ENCODE measurements at regions of chr15 and their contacts with region 1.

Region 1: DNA sequence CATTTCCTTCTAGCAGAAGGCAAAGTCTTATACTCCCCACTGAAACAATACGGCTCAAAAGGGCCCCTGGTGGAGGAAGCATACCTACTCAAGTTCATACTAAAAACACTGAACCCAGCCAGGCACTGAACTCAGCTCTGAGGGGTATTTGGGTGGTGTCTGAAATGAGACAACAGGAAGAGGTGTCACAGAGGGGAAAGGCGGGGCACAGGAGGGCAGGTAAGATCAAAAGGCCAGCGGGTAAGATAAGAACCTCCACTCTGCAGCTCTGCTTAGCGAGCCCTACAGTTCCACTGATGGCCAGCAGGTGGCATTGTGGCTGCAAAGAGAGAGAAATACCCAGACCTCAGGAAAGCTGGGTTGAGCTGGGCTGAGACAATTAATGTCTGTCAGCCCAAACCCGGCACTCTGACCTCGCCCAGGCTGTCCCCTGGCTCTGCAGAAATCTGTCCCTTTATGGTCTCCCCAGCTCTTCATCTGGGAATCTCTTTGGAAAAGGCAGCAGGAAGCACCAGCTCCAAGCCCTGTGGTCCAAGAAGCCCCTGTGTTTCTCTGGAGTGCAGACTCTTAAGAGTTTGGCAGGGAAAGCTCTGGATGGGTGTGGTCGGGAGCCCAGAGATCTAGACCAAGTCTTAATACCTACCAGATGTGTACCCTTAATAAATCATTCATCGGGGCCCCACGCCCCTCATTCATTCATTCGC is 8.4 kb downstream of the MFGE8 start:
- DNase-seq: peak; percentile 96
- ATAC-seq: peak; percentile 98
- H3K4me3 Mint-ChIP-seq: no peak overlapping the region
- H3K27ac Mint-ChIP-seq: peak overlapping the region; percentile 69
- H3K4me1 Mint-ChIP-seq: peaks cover 22% of the 10 kb centered on the region
- H3K27me3 Mint-ChIP-seq: no peaks in the 10 kb centered on the region
- CTCF ChIP-seq: peak; percentile 84

Region 2: DNA sequence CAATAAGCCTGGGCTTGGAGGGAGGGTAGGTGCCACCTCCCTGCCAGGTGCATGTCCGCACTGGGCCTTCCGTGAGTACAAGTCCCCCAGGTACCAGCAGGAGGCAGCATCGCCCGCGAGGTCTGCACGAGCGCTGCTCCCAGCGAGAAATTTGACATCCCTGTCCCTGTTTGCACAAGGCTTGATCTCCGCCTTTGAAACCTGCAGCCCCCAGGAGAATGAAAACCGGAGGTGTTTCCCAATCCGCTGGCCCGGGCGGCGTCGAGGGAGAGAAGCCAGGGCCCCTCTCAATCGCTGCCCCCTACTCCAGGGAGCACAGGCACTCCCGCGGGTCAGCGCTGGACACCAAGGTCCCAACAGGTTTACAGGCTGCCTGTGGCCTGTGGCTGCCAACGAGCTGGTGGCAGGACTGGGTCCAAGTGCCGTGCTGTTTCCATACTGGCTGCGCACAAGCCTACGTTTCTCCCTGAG is 10.4 kb before region 1 on chr15:
- CTCF ChIA-PET with region 1: interaction called, 50 read pairs
- POLR2A ChIA-PET with region 1: interaction called, 6 read pairs
- intact Hi-C with region 1: no loop called
- DNase-seq: peak; percentile 91
- ATAC-seq: peak; percentile 64
- H3K4me3 Mint-ChIP-seq: peak overlapping the region; percentile 82
- H3K27ac Mint-ChIP-seq: peak overlapping the region; percentile 77
- H3K4me1 Mint-ChIP-seq: peaks cover 32% of the 10 kb centered on the region
- H3K27me3 Mint-ChIP-seq: no peaks in the 10 kb centered on the region
- CTCF ChIP-seq: peak; percentile 96

Region 3: GRCh38 chr15:89003865-89004725 is 99.3 kb after region 1 on chr15:
- CTCF ChIA-PET with region 1: interaction called, 10 read pairs
- POLR2A ChIA-PET with region 1: no interaction called
- intact Hi-C with region 1: no loop called
- DNase-seq: peak; percentile 16
- ATAC-seq: peak; percentile 53
- H3K4me3 Mint-ChIP-seq: no peak overlapping the region
- H3K27ac Mint-ChIP-seq: no peak overlapping the region
- H3K4me1 Mint-ChIP-seq: peaks cover 4% of the 10 kb centered on the region
- H3K27me3 Mint-ChIP-seq: no peaks in the 10 kb centered on the region
- CTCF ChIP-seq: no peak

Region 4: DNA sequence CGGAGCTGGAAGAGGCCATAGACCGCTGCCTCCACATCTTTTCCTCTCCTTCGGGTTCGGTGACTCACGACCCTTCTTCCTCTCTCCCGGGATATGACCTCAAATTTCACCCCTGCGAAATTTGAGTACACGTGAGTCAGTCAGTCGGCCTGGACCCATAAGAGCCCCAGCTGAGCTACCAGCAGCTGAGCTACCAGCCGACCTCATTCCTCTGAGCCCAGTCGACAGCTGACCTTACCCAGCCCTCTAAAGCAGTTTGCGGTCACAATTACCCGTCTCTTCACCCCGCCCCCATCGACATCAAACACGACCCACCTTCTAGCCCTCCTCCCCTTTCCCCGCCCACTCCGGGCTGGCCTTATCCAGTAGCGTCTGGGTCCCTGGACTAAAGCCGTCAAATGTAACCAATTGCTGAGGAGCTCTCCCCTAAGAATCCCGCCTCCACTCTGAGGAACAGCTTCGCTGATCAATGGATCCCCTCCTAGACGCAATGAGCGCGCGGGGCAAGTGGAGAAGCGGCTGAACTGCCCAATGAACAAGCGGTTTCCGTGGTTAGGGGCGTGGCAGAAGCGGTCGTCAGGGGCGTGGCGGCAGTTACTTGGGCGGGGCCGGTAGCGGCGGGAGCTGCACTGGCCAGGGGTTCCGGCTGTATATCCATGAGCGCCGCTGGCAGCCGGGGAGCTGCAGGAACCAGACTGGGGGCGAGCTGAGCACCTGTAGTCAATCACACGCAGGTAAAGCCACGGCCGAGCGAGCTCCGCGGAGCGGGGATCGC is 183.2 kb after region 1 on chr15 and contains the start of gene ABHD2:
- CTCF ChIA-PET with region 1: interaction called, 12 read pairs
- POLR2A ChIA-PET with region 1: no interaction called
- intact Hi-C with region 1: no loop called
- DNase-seq: peak; percentile 99
- ATAC-seq: peak; percentile 98
- H3K4me3 Mint-ChIP-seq: no peak within 1 kb of the TSS
- H3K27ac Mint-ChIP-seq: peak within 1 kb of the TSS; percentile 18
- H3K4me1 Mint-ChIP-seq: peaks cover 36% of the 10 kb centered on the region
- H3K27me3 Mint-ChIP-seq: no peaks in the 10 kb centered on the region
- CTCF ChIP-seq: no peak
- total RNA-seq, gene ABHD2: 36.8 to 38.9 TPM

Region 5: DNA sequence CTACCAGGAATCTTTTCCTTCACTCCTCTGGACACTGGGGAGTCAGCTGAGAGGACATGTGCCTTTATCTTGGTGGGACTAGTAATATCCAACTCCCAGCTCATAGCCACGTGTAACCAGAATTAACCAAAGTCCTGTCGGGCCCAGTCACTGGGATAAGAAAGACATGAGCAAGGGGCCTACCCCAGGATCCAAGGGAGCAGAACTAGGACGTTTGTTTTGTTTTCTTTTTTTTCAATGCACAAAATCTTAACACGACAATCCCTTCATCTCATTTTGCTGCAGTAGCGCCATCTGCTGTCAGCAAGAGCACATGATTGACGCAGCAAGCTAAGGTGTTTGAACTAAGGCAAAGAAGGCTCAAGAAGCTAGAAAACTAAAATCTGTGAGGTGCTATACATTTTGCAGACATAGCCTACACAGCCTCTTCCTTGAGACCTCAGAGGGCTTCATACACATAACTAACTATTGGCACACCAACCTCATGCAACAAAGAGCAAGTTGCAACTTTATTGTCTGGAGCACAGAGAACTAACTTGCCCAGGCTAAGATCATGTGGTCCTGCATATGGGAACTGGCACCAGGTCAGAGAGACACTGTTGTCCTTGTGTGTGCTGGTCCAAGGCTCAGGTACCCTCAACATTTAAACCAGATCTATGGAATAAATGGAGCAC is 273.0 kb after region 1 on chr15:
- CTCF ChIA-PET with region 1: interaction called, 12 read pairs
- POLR2A ChIA-PET with region 1: no interaction called
- intact Hi-C with region 1: loop called (anchors 10 kb)
- DNase-seq: peak; percentile 78
- ATAC-seq: peak; percentile 35
- H3K4me3 Mint-ChIP-seq: no peak overlapping the region
- H3K27ac Mint-ChIP-seq: peak overlapping the region; percentile 36
- H3K4me1 Mint-ChIP-seq: peaks cover 35% of the 10 kb centered on the region
- H3K27me3 Mint-ChIP-seq: no peaks in the 10 kb centered on the region
- CTCF ChIP-seq: peak; percentile 83